Esophagus squamous epithelium (tissue), 5 donors: ENCODE measurements at regions of chr2 and their contacts with region 1.

Region 1: GRCh38 chr2:36351736-36352349 is 3.7 kb upstream of the CRIM1 start:
- DNase-seq: no peak
- H3K4me3 ChIP-seq: no peak overlapping the region
- H3K27ac ChIP-seq: no peak overlapping the region
- H3K4me1 ChIP-seq: peaks cover 0 to 42% (median 11%) of the 10 kb centered on the region in 3 donors
- H3K27me3 ChIP-seq: no peaks in the 10 kb centered on the region
- CTCF ChIP-seq: peak; percentile 35 to 62 (median 56)
- POLR2A ChIP-seq: no peak

Region 2: DNA sequence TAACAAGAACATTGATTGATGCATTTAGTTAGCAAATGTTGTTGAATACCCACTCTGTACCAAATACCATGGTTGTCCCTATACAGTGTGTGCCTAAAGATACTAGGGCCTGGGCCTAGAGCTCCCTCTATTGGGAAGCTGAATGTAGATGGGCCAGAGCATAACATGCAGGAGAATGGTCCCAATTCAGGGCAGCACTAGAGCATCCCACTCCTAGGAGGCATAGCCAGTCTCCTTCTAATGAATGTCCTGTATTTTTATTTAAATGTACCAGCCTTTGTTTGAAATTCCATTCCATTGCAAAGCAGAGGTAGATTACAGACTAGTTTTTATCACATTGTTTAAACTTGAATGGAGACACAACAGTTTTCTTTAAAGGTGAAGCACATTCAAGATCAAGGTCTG is 155.6 kb after region 1 on chr2:
- intact Hi-C with region 1: loop called (anchors 5 kb)
- DNase-seq: no peak
- H3K4me3 ChIP-seq: no peak overlapping the region
- H3K27ac ChIP-seq: no peak overlapping the region
- H3K4me1 ChIP-seq: no peaks in the 10 kb centered on the region
- H3K27me3 ChIP-seq: no peaks in the 10 kb centered on the region
- CTCF ChIP-seq: peak; percentile 37 to 76 (median 62)
- POLR2A ChIP-seq: no peak

Region 3: GRCh38 chr2:36663851-36664695 is 312.2 kb after region 1 on chr2:
- intact Hi-C with region 1: loop called (anchors 5 kb)
- DNase-seq: no peak
- H3K4me3 ChIP-seq: no peak overlapping the region
- H3K27ac ChIP-seq: peak overlapping the region in 1 of 4 donors; percentile 29
- H3K4me1 ChIP-seq: peaks cover 0 to 12% (median 0%) of the 10 kb centered on the region in 3 donors
- H3K27me3 ChIP-seq: peaks cover 0 to 4% (median 0%) of the 10 kb centered on the region in 4 donors
- CTCF ChIP-seq: peak; percentile 51 to 79 (median 74)
- POLR2A ChIP-seq: no peak